Cardiac septum (tissue), 1 donor: ENCODE measurements at regions of chr2 and their contacts with region 1.

Region 1: DNA sequence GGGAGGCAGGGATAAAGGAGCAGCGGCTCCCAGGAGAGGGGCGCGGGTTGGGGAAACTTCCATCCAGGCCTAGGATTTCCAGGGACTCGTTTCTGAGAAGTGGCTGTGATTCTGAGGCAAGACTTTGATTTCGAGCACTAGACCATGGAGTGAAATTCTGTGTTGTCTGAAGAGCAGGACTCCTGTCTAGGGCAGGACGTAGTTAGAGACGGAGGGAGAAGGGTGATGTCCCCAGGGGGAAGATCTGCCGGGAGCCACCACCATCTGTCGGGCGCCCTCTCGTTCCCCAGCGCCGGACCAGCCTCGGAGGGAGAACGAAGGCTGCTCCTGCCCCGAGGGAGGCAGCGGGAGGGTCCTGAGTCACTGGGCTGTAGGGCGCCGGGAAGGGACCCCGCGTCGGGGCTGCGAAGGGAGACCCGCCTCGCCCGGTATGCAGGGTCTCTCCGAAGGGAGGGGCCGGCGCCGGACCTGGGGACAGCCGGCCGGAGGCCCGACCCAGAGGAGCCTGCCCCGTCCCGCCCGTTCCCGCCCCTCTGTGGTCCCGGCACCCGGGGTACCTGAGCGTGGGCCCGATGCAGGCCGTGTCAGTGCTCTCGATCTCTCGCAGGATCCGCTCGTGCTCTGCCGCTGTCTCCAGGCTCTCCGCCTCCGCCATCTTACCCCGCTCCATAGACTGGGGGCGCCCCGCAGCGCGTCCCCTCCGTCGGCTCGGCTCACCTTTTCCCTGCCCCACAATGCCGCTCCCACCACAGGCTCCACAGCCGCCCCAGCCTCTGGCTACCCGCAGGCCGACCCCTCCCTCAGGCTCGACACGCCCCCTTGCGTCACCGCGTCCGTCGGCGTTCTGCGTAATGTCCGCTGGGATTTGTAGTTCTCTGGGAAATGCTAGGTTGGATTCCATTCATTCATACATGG is at the start of gene EXOC6B:
- DNase-seq: peak; percentile 95
- total RNA-seq, gene EXOC6B: 173 TPM

Region 2: GRCh38 chr2:72744049-72744448 is 81.4 kb before region 1 on chr2:
- intact Hi-C with region 1: no loop called
- DNase-seq: no peak

Region 3: DNA sequence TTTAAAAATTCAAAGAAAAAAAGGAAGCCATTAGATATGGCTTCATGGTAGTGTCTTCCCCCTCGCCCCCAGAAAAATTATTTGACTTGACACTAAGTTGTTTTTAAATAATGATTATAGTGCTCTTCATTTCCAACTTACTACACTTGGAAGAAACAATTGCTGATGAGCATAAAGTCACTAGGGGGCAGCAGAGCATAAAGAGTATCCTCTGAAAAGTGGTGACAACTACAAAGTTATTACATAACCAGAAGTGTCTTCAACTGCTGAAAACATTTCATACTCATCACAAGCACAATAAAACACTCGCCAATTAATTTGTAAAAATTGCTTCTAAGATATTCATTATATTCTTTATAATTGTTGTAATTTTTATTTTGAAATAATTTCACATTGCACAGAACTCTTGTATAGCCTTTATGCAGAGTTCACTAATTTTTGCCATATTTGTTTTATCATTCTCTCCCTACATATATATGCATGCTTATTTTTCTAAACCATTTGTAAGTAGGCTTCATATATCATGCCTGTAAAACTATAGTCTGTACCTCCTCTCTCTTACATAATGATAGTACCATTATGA is 54.5 kb before region 1 on chr2:
- intact Hi-C with region 1: loop called (anchors 10 kb)
- DNase-seq: no peak

Region 4: DNA sequence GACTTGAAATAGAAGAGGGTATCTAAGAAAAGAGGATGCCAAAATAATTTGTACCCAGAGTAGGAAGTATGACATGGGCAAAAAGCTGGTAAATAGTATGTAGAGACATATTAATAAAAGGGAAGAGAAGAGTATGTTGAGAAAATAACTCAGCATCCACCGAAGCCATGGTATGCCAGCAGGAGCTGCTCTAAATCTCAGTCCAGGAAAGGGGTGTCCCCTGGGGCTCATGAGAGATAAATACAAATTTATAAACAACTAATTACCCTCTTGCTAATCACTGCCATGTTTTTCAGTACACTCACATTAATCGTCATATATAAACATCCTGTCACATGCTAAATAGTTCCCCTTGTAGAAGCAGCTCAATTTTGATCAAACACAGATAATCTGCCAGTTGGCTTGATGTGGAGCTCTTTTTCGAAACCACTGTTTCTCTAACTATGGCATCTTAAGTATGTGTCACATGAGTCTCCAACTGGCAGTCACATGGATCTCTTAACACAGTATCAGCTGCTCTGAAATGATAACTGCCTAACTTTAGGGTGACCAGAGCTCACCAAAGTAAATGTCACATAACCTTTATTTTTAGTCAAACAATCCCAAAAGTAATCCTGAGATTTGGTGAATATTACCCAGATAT is 31.6 kb before region 1 on chr2:
- intact Hi-C with region 1: loop called (anchors 5 kb)
- DNase-seq: no peak